ENCODE measurements at regions of chr12 and their contacts with region 1.

Region 1: GRCh38 chr12:95054206-95054605 is 19.2 kb downstream of the NR2C1 start:
- DNase-seq: no peak
- CTCF ChIP-seq: no peak

Region 2: GRCh38 chr12:95022477-95022876 is 31.7 kb before region 1 on chr12:
- CTCF ChIA-PET with region 1: no interaction called
- POLR2A ChIA-PET with region 1: no interaction called
- DNase-seq: no peak
- CTCF ChIP-seq: peak; percentile 13

Region 3: GRCh38 chr12:95037906-95038305 is 16.3 kb before region 1 on chr12:
- CTCF ChIA-PET with region 1: interaction called, 11 read pairs
- POLR2A ChIA-PET with region 1: no interaction called
- DNase-seq: no peak
- CTCF ChIP-seq: no peak

Region 4: GRCh38 chr12:95102916-95103671 is 48.9 kb after region 1 on chr12:
- CTCF ChIA-PET with region 1: no interaction called
- POLR2A ChIA-PET with region 1: no interaction called
- DNase-seq: peak; percentile 68
- CTCF ChIP-seq: no peak

Measured in GM10248 (cell line).